HepG2 (cell line): ENCODE measurements at regions of chr11 and their contacts with region 1.

Region 1: DNA sequence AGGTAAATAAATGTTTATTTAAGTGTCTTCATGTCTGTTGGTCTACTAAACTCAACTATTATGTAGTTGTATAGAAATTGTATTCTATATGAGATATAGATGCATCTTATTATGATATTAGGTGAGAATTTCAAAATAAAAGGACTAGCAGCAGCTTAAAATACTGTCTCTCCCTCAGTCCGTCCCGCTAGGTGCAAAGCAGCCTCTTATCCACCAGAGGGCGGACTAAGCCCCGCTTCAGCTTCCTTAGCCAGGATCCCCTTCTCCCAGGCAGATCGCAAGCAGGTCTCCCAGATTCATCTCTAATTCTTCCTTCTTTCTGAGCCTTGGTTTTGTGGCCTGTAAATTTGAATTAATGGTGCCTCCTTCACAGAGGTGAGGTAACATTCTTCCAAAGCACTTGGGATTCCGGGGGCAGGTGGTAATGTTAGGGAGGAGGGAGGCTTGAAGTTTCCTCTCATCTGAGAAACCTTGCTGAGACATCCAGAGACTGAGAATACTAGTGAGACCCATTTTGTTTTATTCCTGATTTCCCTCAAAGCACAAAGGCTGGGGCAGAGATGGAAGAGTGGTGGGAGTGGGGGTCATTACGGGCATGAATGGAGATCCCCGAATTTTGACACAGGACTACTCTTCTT is 13.5 kb upstream of the INSC start:
- DNase-seq: peak; percentile 39
- ATAC-seq: peak; percentile 93
- H3K4me3 ChIP-seq: no peak overlapping the region
- H3K27ac ChIP-seq: no peak overlapping the region
- H3K4me1 ChIP-seq: no peaks in the 10 kb centered on the region
- H3K27me3 ChIP-seq: no peaks in the 10 kb centered on the region
- CTCF ChIP-seq: peak; percentile 82
- EP300 ChIP-seq: no peak
- POLR2A ChIP-seq: no peak
- RAD21 ChIP-seq: peak; percentile 67; the same call in 1 of the 2 replicates

Region 2: GRCh38 chr11:15159085-15159484 is 57.9 kb after region 1 on chr11:
- CTCF ChIA-PET with region 1: interaction called, 6 read pairs
- POLR2A ChIA-PET with region 1: no interaction called
- in situ Hi-C with region 1: no loop called
- intact Hi-C with region 1: loop called (anchors 5 kb)
- DNase-seq: no peak
- ATAC-seq: peak; percentile 84
- H3K4me3 ChIP-seq: no peak overlapping the region
- H3K27ac ChIP-seq: no peak overlapping the region
- H3K4me1 ChIP-seq: no peaks in the 10 kb centered on the region
- H3K27me3 ChIP-seq: no peaks in the 10 kb centered on the region
- CTCF ChIP-seq: peak; percentile 22
- EP300 ChIP-seq: no peak
- POLR2A ChIP-seq: no peak
- RAD21 ChIP-seq: no peak

Region 3: DNA sequence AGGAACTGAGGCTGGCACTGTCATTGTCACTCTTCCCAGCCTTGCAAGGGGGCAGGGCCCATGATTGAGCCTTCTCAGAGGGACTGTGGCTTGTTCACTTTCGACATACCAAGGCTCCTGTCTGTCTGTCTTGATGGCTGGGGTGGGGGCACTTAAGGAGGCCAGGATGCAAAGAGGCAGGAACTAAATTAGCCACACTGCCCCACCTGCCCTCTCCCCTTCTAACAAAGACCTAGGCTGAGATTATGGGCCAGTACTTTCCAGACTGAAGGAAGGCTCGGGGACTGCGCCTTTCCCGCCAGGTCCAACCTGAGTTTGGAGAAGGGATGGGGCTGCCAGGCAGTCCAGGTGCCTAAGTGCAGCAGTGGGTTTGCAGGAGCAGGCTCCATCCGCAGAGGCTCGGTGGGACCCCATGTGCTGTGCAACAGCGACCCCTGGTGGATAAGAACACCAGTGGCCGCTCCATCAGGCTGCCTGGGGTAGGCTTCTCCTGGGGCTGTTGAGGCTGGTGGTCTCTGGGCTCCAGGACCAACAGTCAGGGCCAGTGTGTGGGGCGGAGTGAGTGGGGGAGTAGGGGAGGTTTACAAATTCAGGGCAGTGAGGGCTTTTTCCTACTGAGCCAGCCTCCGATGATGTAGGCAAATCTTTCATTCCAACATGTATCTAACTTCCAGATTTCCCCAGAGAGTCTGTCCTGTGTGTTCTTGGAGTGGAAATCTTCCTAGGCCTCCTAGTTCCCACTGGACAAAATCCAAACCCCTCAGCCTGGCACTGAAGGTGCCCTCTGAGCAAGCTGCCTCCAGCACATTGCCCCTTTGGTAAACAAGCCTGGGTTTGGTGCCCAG is 107.4 kb after region 1 on chr11:
- CTCF ChIA-PET with region 1: interaction called, 79 read pairs
- POLR2A ChIA-PET with region 1: no interaction called
- in situ Hi-C with region 1: loop called (anchors 5 kb)
- intact Hi-C with region 1: loop called (anchors 1 kb)
- DNase-seq: peak; percentile 52
- ATAC-seq: peak; percentile 99
- H3K4me3 ChIP-seq: no peak overlapping the region
- H3K27ac ChIP-seq: no peak overlapping the region
- H3K4me1 ChIP-seq: peaks cover 5% of the 10 kb centered on the region; the same call in 1 of the 2 replicates
- H3K27me3 ChIP-seq: no peaks in the 10 kb centered on the region
- CTCF ChIP-seq: peak; percentile 97
- EP300 ChIP-seq: no peak
- POLR2A ChIP-seq: no peak
- RAD21 ChIP-seq: peak; percentile 91

Region 4: GRCh38 chr11:15349413-15349812 is 248.2 kb after region 1 on chr11:
- CTCF ChIA-PET with region 1: no interaction called
- POLR2A ChIA-PET with region 1: no interaction called
- in situ Hi-C with region 1: no loop called
- intact Hi-C with region 1: no loop called
- DNase-seq: no peak
- ATAC-seq: no peak
- H3K4me3 ChIP-seq: no peak overlapping the region
- H3K27ac ChIP-seq: no peak overlapping the region
- H3K4me1 ChIP-seq: no peaks in the 10 kb centered on the region
- H3K27me3 ChIP-seq: no peaks in the 10 kb centered on the region
- CTCF ChIP-seq: no peak
- EP300 ChIP-seq: no peak
- POLR2A ChIP-seq: no peak
- RAD21 ChIP-seq: no peak